Activated CD4-positive, alpha-beta T cell treated with anti-CD3 and anti-CD28 coated beads, Interleukin-2, amount 10 ng/mL, durations not matched to agents 24 days and 14 days (primary cell): ENCODE measurements at regions of chr14 and their contacts with region 1.

Region 1: GRCh38 chr14:50839048-50839447 is 8.1 kb upstream of the NIN start:
- DNase-seq: no peak
- H3K4me3 Mint-ChIP-seq: no peak overlapping the region
- H3K27ac Mint-ChIP-seq: no peak overlapping the region
- H3K4me1 Mint-ChIP-seq: peaks cover 32% of the 10 kb centered on the region
- H3K27me3 Mint-ChIP-seq: peaks cover 3% of the 10 kb centered on the region

Region 2: GRCh38 chr14:50855558-50855957 is 16.5 kb after region 1 on chr14:
- intact Hi-C with region 1: loop called (anchors 2 kb)
- DNase-seq: no peak
- H3K4me3 Mint-ChIP-seq: no peak overlapping the region
- H3K27ac Mint-ChIP-seq: no peak overlapping the region
- H3K4me1 Mint-ChIP-seq: peaks cover 16% of the 10 kb centered on the region
- H3K27me3 Mint-ChIP-seq: peaks cover 14% of the 10 kb centered on the region